Posterior vena cava (tissue), 2 donors: ENCODE measurements at regions of chr9 and their contacts with region 1.

Region 1: GRCh38 chr9:132293145-132293721 is 61.6 kb downstream of the SETX start:
- DNase-seq: no peak

Region 2: GRCh38 chr9:132324425-132324824 is 31.2 kb after region 1 on chr9:
- intact Hi-C with region 1: loop called in 1 of 2 experiments (anchors 1 kb)
- DNase-seq: no peak